Sciatic nerve (tissue), 2 donors: ENCODE measurements at regions of chr14 and their contacts with region 1.

Region 1: DNA sequence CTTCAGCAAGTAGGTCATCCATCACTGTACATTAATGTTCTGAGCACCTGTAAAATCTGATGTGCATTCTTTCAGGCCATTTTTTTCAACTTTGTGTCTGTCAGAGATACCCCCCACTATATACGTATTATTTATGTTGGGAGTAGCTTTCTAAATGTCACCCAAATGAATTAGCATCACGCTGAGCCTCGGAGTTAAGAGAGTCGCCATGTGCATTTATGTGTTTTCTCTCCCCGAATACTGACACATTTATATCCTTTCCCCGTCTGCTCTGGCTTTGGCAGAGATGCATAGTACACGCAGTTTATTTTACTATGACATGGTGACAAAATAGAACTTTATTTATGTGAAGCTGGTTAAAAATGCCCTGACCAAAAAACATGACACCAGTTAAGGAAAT is 216.4 kb downstream of the SLC25A21 start:
- DNase-seq: no peak
- ATAC-seq: no peak

Region 2: GRCh38 chr14:35877286-35877685 is 1078.7 kb before region 1 on chr14:
- intact Hi-C with region 1: no loop called
- DNase-seq: no peak
- ATAC-seq: no peak

Region 3: GRCh38 chr14:36626151-36626550 is 329.8 kb before region 1 on chr14:
- intact Hi-C with region 1: no loop called
- DNase-seq: no peak
- ATAC-seq: no peak

Region 4: GRCh38 chr14:36936013-36936678 is 19.8 kb before region 1 on chr14:
- intact Hi-C with region 1: no loop called
- DNase-seq: no peak
- ATAC-seq: no peak

Region 5: GRCh38 chr14:36981832-36982528 is 26.0 kb after region 1 on chr14:
- intact Hi-C with region 1: loop called (anchors 2 kb)
- DNase-seq: no peak
- ATAC-seq: no peak